ENCODE measurements at regions of chr2 and their contacts with region 1.

Region 1: GRCh38 chr2:68196120-68196716 is 38.5 kb downstream of the PNO1 start:
- DNase-seq: peak; percentile 66
- ATAC-seq: peak; percentile 41
- H3K4me3 ChIP-seq: no peak overlapping the region
- H3K4me3 Mint-ChIP-seq: no peak overlapping the region
- H3K27ac ChIP-seq: peak overlapping the region in 1 of 2 donors; percentile 39
- H3K27ac Mint-ChIP-seq: no peak overlapping the region
- H3K4me1 ChIP-seq: peaks cover 3 to 24% of the 10 kb centered on the region in 2 donors
- H3K4me1 Mint-ChIP-seq: peaks cover 56% of the 10 kb centered on the region
- H3K27me3 ChIP-seq: no peaks in the 10 kb centered on the region
- H3K27me3 Mint-ChIP-seq: no peaks in the 10 kb centered on the region
- CTCF ChIP-seq: peak; percentile 95

Region 2: DNA sequence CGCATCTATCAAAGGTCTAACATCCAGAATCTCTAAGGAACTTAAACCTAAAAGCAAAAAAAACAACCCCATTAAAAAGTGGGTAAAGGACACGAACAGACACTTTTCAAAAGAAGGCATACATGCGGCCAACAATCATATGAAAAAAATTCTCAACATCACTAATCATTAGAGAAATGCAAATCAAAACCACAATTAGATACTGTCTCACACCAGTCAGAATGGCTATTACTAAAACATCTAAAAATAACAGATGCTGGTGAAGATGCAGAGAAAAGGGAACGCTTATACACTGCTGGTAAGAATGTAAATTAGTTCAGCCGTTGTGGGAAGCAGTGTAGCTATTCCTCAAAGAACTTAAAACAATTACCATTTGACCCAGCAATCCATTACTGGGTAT is 18.2 kb after region 1 on chr2:
- CTCF ChIA-PET with region 1: interaction called, 21 read pairs
- POLR2A ChIA-PET with region 1: no interaction called
- intact Hi-C with region 1: loop called (anchors 2 kb)
- DNase-seq: no peak
- ATAC-seq: peak; percentile 28
- H3K4me3 ChIP-seq: no peak overlapping the region
- H3K4me3 Mint-ChIP-seq: peak overlapping the region; percentile 46
- H3K27ac ChIP-seq: no peak overlapping the region
- H3K27ac Mint-ChIP-seq: peak overlapping the region; percentile 27
- H3K4me1 ChIP-seq: peaks cover 12 to 28% of the 10 kb centered on the region in 2 donors
- H3K4me1 Mint-ChIP-seq: peaks cover 73% of the 10 kb centered on the region
- H3K27me3 ChIP-seq: no peaks in the 10 kb centered on the region
- H3K27me3 Mint-ChIP-seq: no peaks in the 10 kb centered on the region
- CTCF ChIP-seq: no peak

Region 3: GRCh38 chr2:68244456-68244855 is 48.2 kb after region 1 on chr2:
- CTCF ChIA-PET with region 1: interaction called, 26 read pairs
- POLR2A ChIA-PET with region 1: no interaction called
- intact Hi-C with region 1: no loop called
- DNase-seq: no peak
- ATAC-seq: no peak
- H3K4me3 ChIP-seq: no peak overlapping the region
- H3K4me3 Mint-ChIP-seq: no peak overlapping the region
- H3K27ac ChIP-seq: peak overlapping the region in 1 of 2 donors; percentile 17
- H3K27ac Mint-ChIP-seq: no peak overlapping the region
- H3K4me1 ChIP-seq: peaks cover 65 to 80% of the 10 kb centered on the region in 2 donors
- H3K4me1 Mint-ChIP-seq: peaks cover 28% of the 10 kb centered on the region
- H3K27me3 ChIP-seq: no peaks in the 10 kb centered on the region
- H3K27me3 Mint-ChIP-seq: no peaks in the 10 kb centered on the region
- CTCF ChIP-seq: no peak

Region 4: GRCh38 chr2:68282811-68283418 is 86.7 kb after region 1 on chr2:
- CTCF ChIA-PET with region 1: interaction called, 103 read pairs
- POLR2A ChIA-PET with region 1: no interaction called
- intact Hi-C with region 1: loop called (anchors 1 kb)
- DNase-seq: peak; percentile 57
- ATAC-seq: peak; percentile 53
- H3K4me3 ChIP-seq: no peak overlapping the region
- H3K4me3 Mint-ChIP-seq: no peak overlapping the region
- H3K27ac ChIP-seq: no peak overlapping the region
- H3K27ac Mint-ChIP-seq: no peak overlapping the region
- H3K4me1 ChIP-seq: peaks cover 0 to 3% of the 10 kb centered on the region in 2 donors
- H3K4me1 Mint-ChIP-seq: peaks cover 4% of the 10 kb centered on the region
- H3K27me3 ChIP-seq: no peaks in the 10 kb centered on the region
- H3K27me3 Mint-ChIP-seq: no peaks in the 10 kb centered on the region
- CTCF ChIP-seq: peak; percentile 88

Region 5: DNA sequence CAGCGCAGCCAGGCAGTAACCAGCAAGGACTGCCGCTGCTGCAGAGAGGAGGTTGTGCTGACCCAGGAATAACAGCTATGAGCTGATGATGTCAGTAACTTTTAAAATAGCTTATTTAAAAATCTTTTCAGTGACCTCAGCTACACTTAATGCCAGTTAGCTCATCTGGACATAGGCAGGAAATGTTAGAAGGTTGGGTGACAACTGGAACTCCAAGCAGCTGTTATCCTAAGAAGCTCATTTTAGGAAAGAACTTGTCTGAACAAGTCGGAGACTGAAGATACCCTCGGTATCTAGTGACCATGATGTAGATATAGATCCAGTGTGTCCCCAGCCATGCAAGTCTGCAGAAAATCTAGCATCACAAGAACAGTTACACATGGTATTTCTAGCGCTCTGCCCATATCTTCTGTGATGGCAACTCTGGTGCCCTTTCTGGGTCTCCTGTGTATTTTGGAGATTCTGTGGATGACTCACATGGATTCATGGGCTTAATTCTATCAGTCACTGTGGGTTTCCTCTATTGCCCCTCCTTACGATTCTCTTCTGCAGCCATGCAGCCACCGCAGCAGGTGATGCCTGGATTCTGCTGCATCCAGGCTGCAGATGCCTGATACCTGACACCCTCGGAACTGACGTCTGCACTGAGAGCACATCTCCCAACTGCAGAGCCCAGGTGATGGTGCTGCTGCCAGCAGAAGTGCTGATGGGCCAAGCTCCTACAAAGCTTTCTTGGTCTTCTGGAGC is 149.1 kb after region 1 on chr2:
- CTCF ChIA-PET with region 1: no interaction called
- POLR2A ChIA-PET with region 1: no interaction called
- intact Hi-C with region 1: no loop called
- DNase-seq: no peak
- ATAC-seq: no peak
- H3K4me3 ChIP-seq: no peak overlapping the region
- H3K4me3 Mint-ChIP-seq: no peak overlapping the region
- H3K27ac ChIP-seq: no peak overlapping the region
- H3K27ac Mint-ChIP-seq: no peak overlapping the region
- H3K4me1 ChIP-seq: peaks cover 0 to 3% of the 10 kb centered on the region in 2 donors
- H3K4me1 Mint-ChIP-seq: peaks cover 3% of the 10 kb centered on the region
- H3K27me3 ChIP-seq: peaks cover 0 to 3% (median 1%) of the 10 kb centered on the region in 4 experiments
- H3K27me3 Mint-ChIP-seq: peaks cover 21% of the 10 kb centered on the region
- CTCF ChIP-seq: no peak